Breast epithelium (tissue), 4 donors: ENCODE measurements at regions of chrX and their contacts with region 1.

Region 1: DNA sequence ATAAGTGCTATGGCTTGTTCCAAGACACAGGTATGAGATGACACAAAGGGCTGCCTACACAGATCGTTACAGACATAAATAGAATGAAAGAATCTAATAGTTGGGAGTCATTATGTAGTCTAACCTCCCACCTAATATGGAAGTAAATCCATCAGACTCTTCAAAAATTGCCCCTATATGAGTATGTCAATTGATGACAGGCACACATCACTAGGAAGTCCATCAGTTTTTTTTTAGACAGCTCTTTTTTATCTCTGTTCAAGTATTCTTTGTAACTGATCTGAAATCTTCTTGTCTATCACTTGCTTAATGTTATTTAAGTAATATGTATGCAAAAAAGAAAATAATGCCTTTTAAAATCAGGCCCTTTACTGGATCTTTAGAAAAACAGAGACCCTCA is 191.6 kb downstream of the UBE2NL start:
- DNase-seq: no peak
- H3K4me3 ChIP-seq: no peak overlapping the region
- H3K27ac ChIP-seq: no peak overlapping the region
- H3K4me1 ChIP-seq: no peaks in the 10 kb centered on the region
- H3K27me3 ChIP-seq: no peaks in the 10 kb centered on the region
- CTCF ChIP-seq: no peak
- POLR2A ChIP-seq: no peak

Region 2: GRCh38 chrX:142804085-142804484 is 1271.3 kb before region 1 on chrX:
- intact Hi-C with region 1: loop called (anchors 10 kb)
- DNase-seq: no peak
- H3K4me3 ChIP-seq: no peak overlapping the region
- H3K27ac ChIP-seq: no peak overlapping the region
- H3K4me1 ChIP-seq: no peaks in the 10 kb centered on the region
- H3K27me3 ChIP-seq: no peaks in the 10 kb centered on the region
- CTCF ChIP-seq: no peak
- POLR2A ChIP-seq: no peak